Activated naive CD4-positive, alpha-beta T cell treated with anti-CD3 and anti-CD28 coated beads for 36 hours (primary cell): ENCODE measurements at regions of chr9 and their contacts with region 1.

Region 1: DNA sequence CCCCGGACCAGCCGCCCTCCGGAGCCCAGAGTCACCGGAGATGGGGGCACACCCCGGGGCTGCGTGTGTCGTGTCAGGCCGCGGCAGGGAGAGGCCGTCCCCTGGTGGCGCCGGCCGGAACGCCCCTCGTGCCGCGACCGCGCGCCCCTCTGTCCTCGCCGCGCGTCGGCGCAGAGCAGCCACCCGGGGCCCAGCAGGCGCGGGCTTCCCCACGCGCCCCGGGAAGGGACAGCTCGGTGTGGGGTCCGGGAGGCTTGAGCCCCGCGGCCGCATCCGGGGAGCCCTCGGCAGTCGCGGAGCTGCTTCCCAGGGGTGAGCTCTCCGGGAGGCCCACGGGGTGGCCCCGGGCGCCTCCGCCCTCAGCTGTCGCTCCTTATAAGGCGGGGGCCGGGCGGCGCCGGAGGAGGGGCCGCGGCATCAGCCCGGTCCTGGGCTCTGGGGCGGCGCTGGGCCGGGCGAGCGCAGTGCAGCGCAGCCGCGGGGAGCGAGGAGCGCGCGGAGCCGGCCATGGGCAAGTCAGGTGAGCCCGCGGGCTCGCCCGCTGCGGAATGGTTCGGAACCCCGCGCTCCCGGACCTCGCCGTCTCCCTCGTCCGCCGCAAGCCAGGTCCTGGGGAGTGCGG is at the start of gene GLIPR2:
- DNase-seq: peak; percentile 80
- H3K4me3 Mint-ChIP-seq: peak within 1 kb of the TSS; percentile 86
- H3K27ac Mint-ChIP-seq: no peak within 1 kb of the TSS
- H3K4me1 Mint-ChIP-seq: peaks cover 44% of the 10 kb centered on the region
- H3K27me3 Mint-ChIP-seq: no peaks in the 10 kb centered on the region
- total RNA-seq, gene GLIPR2: 8.0 to 9.7 TPM

Region 2: DNA sequence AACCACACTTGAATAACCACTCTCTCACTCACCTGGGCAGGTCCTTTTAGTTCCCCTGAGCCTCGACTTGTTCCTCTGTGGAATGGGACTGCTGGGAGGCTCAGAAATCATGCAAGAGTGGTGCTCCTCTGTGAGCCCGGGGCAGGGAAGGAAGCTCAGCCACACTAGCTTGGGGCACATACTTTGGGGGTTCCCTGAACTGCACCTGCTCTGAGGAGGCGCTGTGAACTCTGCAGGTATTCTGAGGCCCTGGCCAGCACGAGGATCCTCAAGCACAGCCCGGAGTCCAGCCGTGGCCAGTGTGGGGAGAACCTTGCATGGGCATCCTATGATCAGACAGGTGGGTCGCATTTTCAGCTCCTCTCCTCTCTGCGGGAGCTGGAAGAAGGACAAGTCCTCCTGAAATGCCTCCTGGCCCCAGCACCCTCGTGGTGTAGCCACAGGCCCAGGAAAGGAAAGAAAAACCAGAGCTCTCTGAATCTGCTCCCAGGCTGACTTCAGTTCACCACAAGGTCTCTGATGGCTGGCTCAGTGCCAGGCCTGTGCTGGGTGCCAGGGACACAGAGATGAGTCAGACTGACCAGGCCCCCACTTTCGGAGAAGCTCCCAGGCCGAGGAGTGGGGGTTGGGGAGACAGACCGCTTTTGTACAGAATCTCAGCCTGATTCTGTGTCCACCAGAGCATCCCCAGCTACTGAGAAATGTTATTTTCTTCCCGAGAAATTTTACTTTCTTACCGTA is 12.1 kb after region 1 on chr9:
- CTCF ChIA-PET with region 1: interaction called, 20 read pairs
- intact Hi-C with region 1: loop called (anchors 1 kb)
- DNase-seq: peak; percentile 69
- H3K4me3 Mint-ChIP-seq: no peak overlapping the region
- H3K27ac Mint-ChIP-seq: no peak overlapping the region
- H3K4me1 Mint-ChIP-seq: peaks cover 82% of the 10 kb centered on the region
- H3K27me3 Mint-ChIP-seq: no peaks in the 10 kb centered on the region

Region 3: DNA sequence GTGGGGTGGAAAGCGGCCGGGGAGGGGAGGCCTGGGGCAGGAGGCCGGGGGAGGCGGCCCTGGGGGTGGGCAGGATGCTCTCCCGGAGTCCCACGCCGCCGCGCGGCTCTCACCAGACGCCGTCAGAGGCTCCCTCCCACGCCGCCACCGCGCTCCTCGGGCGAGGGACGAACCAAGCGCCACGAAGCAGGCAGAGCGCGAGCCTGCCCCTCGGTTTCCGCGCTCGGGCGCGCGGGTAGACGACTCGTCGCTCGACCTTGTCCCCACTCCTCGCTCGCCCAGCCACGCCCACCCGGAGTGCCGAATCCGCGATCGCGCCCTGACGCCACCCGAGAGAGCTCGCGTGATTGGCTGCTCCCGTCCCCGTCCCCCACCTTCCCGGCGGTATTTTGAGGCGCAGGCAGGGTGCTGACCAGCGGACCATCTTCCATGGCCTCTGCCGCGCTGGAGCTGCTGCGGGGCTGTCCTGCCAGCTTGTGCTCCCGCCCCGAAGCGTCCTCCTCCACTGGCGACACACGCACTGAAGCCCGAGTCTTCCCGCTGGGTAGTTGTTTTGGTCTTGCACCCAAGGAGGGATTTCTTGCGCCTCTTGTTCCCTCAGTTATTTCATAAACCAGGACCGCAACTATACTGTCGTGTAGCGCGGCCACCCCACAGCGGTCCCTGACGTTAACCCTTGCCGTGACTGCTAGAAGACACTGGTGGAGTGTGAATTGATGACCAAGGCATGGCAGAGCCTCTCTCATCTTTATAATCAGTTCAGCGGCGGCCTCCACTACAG is 122.0 kb after region 1 on chr9 and contains the start of gene GNE:
- CTCF ChIA-PET with region 1: no interaction called
- intact Hi-C with region 1: loop called (anchors 5 kb)
- DNase-seq: peak; percentile 97
- H3K4me3 Mint-ChIP-seq: peak within 1 kb of the TSS; percentile 93
- H3K27ac Mint-ChIP-seq: peak within 1 kb of the TSS; percentile 81
- H3K4me1 Mint-ChIP-seq: peaks cover 14% of the 10 kb centered on the region
- H3K27me3 Mint-ChIP-seq: no peaks in the 10 kb centered on the region
- total RNA-seq, gene GNE: 14.5 to 15.2 TPM

Region 4: DNA sequence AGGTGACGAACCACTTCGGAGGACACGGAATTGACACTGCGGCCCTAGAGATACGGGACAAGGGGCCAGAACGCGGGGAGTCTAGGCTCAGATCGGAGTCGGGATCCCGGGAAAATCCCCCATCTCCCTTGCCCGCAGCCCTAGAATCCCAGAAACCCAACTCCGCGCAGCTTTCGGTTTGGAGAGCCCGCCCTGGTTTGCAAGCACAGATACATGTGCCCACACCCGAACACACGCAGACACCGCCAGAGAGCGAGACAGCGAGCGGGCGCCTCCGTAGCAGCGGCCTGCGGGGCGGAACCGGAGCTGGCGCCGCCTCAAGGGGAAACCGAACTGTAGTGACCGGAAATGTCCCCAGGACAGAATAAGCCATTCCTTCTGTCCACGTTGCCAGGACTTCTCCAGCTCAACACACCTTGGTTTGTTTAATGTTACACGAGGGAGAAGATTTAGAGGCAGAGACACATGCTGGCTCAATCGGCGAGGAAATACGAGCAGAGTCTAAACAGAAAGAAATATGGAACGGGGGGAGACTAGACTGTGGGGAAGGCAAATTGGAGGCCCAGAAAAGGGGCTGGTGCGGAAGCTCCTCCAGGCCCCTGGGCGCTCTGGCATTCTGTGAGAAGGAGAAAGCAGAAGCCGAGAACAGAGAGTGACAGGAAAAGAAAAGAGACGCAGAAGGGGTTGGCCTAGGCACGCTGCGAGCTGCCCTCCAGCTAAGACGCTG is 900.6 kb after region 1 on chr9:
- CTCF ChIA-PET with region 1: no interaction called
- intact Hi-C with region 1: loop called (anchors 5 kb)
- DNase-seq: peak; percentile 51
- H3K4me3 Mint-ChIP-seq: peak overlapping the region; percentile 81
- H3K27ac Mint-ChIP-seq: no peak overlapping the region
- H3K4me1 Mint-ChIP-seq: peaks cover 30% of the 10 kb centered on the region
- H3K27me3 Mint-ChIP-seq: peaks cover 80% of the 10 kb centered on the region